Ovary (tissue), 10 donors: ENCODE measurements at regions of chr2 and their contacts with region 1.

Region 1: DNA sequence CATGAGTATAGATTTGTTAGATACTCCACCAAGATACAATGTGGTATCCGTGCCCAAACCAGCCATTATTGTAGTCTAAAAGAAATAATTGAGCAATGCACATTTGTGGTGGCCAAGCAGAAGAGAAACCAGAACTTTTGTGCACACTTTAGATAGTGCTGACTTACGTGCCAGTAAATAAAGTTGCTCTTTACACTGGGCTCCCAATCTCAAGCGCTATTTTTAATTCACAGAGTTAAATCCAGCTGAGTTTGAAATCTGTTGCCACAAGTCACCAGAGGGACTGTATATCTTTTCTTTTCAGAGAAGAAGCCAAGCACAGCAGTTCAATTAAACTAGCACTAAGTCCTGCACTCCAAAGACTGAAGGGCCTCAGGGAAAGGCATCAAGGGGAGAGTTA is 680.4 kb downstream of the TDRD15 start:
- DNase-seq: no peak
- H3K4me3 ChIP-seq: no peak overlapping the region
- H3K27ac ChIP-seq: no peak overlapping the region
- H3K4me1 ChIP-seq: no peaks in the 10 kb centered on the region
- H3K27me3 ChIP-seq: no peaks in the 10 kb centered on the region
- CTCF ChIP-seq: no peak
- EP300 ChIP-seq: no peak
- POLR2A ChIP-seq: no peak

Region 2: GRCh38 chr2:21740484-21740883 is 63.7 kb before region 1 on chr2:
- intact Hi-C with region 1: loop called in 1 of 4 experiments (anchors 2 kb)
- DNase-seq: no peak
- H3K4me3 ChIP-seq: no peak overlapping the region
- H3K27ac ChIP-seq: no peak overlapping the region
- H3K4me1 ChIP-seq: no peaks in the 10 kb centered on the region
- H3K27me3 ChIP-seq: no peaks in the 10 kb centered on the region
- CTCF ChIP-seq: no peak
- EP300 ChIP-seq: no peak
- POLR2A ChIP-seq: no peak